CD4-positive, alpha-beta memory T cell (primary cell): ENCODE measurements at regions of chr3 and their contacts with region 1.

Region 1: GRCh38 chr3:46368569-46368968 is 2.2 kb upstream of the CCR5 start:
- DNase-seq: peak; percentile 71 to 81 (median 75)
- H3K4me3 ChIP-seq: no peak overlapping the region
- H3K4me3 Mint-ChIP-seq: peak overlapping the region in 7 of 8 donors; percentile 62 to 80 (median 73)
- H3K27ac ChIP-seq: peak overlapping the region; percentile 52
- H3K27ac Mint-ChIP-seq: peak overlapping the region; percentile 57 to 95 (median 83)
- H3K4me1 ChIP-seq: peaks cover 63% of the 10 kb centered on the region
- H3K4me1 Mint-ChIP-seq: peaks cover 42 to 82% (median 67%) of the 10 kb centered on the region in 4 donors
- H3K27me3 ChIP-seq: no peaks in the 10 kb centered on the region
- H3K27me3 Mint-ChIP-seq: no peaks in the 10 kb centered on the region

Region 2: GRCh38 chr3:46098319-46098761 is 270.2 kb before region 1 on chr3:
- CTCF ChIA-PET with region 1: interaction called, 13 read pairs
- POLR2A ChIA-PET with region 1: interaction called, 4 read pairs
- intact Hi-C with region 1: no loop called
- DNase-seq: peak; percentile 41 to 58 (median 50)
- H3K4me3 ChIP-seq: no peak overlapping the region
- H3K4me3 Mint-ChIP-seq: peak overlapping the region in 7 of 8 donors; percentile 7 to 83 (median 71)
- H3K27ac ChIP-seq: peak overlapping the region; percentile 35
- H3K27ac Mint-ChIP-seq: peak overlapping the region; percentile 78 to 93 (median 90)
- H3K4me1 ChIP-seq: peaks cover 39% of the 10 kb centered on the region
- H3K4me1 Mint-ChIP-seq: peaks cover 24 to 47% (median 38%) of the 10 kb centered on the region in 4 donors
- H3K27me3 ChIP-seq: no peaks in the 10 kb centered on the region
- H3K27me3 Mint-ChIP-seq: no peaks in the 10 kb centered on the region

Region 3: DNA sequence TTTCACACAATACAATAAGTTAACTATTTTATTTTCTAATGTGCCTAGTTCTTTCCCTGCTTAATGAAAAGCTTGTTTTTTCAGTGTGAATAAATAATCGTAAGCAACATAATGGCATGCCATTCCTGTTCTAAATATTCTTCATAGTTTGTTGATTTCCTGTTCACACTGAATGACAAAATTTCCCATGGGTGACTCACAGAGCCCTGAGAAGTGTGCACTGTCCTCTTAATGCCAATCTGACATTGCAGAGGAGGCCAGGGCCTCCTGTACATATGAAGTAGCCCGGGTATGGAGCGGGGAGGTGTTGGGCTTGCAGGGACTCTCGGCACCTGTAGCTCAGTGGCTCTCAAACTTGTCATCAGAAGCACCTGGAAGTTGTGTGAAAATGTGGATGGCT is 102.0 kb before region 1 on chr3:
- CTCF ChIA-PET with region 1: interaction called, 275 read pairs
- POLR2A ChIA-PET with region 1: interaction called, 11 read pairs
- intact Hi-C with region 1: no loop called
- DNase-seq: no peak
- H3K4me3 ChIP-seq: no peak overlapping the region
- H3K4me3 Mint-ChIP-seq: no peak overlapping the region
- H3K27ac ChIP-seq: no peak overlapping the region
- H3K27ac Mint-ChIP-seq: no peak overlapping the region
- H3K4me1 ChIP-seq: peaks cover 30% of the 10 kb centered on the region
- H3K4me1 Mint-ChIP-seq: peaks cover 14 to 44% (median 32%) of the 10 kb centered on the region in 4 donors
- H3K27me3 ChIP-seq: no peaks in the 10 kb centered on the region
- H3K27me3 Mint-ChIP-seq: no peaks in the 10 kb centered on the region

Region 4: GRCh38 chr3:46297658-46298463 is 70.7 kb before region 1 on chr3:
- CTCF ChIA-PET with region 1: interaction called, 48 read pairs
- POLR2A ChIA-PET with region 1: interaction called, 32 read pairs
- intact Hi-C with region 1: no loop called
- DNase-seq: no peak
- H3K4me3 ChIP-seq: no peak overlapping the region
- H3K4me3 Mint-ChIP-seq: peak overlapping the region in 7 of 8 donors; percentile 3 to 79 (median 37)
- H3K27ac ChIP-seq: peak overlapping the region; percentile 25
- H3K27ac Mint-ChIP-seq: peak overlapping the region; percentile 69 to 91 (median 79)
- H3K4me1 ChIP-seq: peaks cover 86% of the 10 kb centered on the region
- H3K4me1 Mint-ChIP-seq: peaks cover 68 to 97% (median 86%) of the 10 kb centered on the region in 4 donors
- H3K27me3 ChIP-seq: no peaks in the 10 kb centered on the region
- H3K27me3 Mint-ChIP-seq: no peaks in the 10 kb centered on the region

Region 5: DNA sequence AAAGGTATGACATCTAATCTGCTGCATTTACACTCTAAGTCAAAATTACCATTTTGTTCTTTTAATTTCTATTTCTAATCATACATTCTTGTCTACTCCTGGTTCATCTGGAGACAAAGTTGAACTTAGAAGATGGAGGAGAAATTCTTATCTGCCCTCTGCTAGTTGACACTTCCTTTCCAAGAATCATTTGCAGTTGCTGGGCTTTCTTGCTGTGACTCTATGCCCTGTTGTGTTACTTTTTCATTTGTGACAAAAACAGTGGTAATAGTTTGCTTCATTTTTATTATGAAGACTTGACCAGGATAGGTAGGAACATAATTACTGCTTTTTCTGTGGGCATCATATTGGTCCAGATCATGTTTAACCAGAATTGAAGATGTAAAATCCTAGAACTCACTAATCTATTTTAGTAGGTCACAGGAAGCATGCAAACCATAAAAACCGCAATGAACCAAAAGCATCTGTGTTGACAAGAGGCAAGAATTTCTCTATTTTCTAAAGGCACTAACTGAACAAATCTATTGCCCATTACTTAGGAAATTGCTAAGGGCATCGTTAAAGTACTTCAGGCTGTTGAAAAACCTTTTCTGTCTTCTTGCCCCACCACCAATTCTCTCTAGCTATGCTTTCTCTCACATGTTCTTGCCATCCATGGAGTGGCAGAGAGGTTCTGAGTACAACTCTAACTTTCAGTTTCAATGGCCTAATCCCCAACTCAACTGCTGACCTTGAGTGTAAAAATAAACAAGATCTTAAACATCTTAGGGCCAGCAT is 18.9 kb before region 1 on chr3:
- CTCF ChIA-PET with region 1: interaction called, 91 read pairs
- POLR2A ChIA-PET with region 1: interaction called, 109 read pairs
- intact Hi-C with region 1: loop called (anchors 2 kb)
- DNase-seq: peak; percentile 37 to 57 (median 54)
- H3K4me3 ChIP-seq: no peak overlapping the region
- H3K4me3 Mint-ChIP-seq: peak overlapping the region; percentile 53 to 82 (median 71)
- H3K27ac ChIP-seq: peak overlapping the region; percentile 10
- H3K27ac Mint-ChIP-seq: peak overlapping the region; percentile 65 to 91 (median 88)
- H3K4me1 ChIP-seq: peaks cover 70% of the 10 kb centered on the region
- H3K4me1 Mint-ChIP-seq: peaks cover 49 to 78% (median 69%) of the 10 kb centered on the region in 4 donors
- H3K27me3 ChIP-seq: no peaks in the 10 kb centered on the region
- H3K27me3 Mint-ChIP-seq: no peaks in the 10 kb centered on the region

Region 6: GRCh38 chr3:46619845-46620778 is 251.5 kb after region 1 on chr3:
- CTCF ChIA-PET with region 1: no interaction called
- POLR2A ChIA-PET with region 1: no interaction called
- intact Hi-C with region 1: no loop called
- DNase-seq: no peak
- H3K4me3 ChIP-seq: no peak overlapping the region
- H3K4me3 Mint-ChIP-seq: no peak overlapping the region
- H3K27ac ChIP-seq: no peak overlapping the region
- H3K27ac Mint-ChIP-seq: no peak overlapping the region
- H3K4me1 ChIP-seq: no peaks in the 10 kb centered on the region
- H3K4me1 Mint-ChIP-seq: no peaks in the 10 kb centered on the region
- H3K27me3 ChIP-seq: no peaks in the 10 kb centered on the region
- H3K27me3 Mint-ChIP-seq: peaks cover 15% of the 10 kb centered on the region in 2 donors